Sigmoid colon (tissue), 7 donors: ENCODE measurements at regions of chrX and their contacts with region 1.

Region 1: DNA sequence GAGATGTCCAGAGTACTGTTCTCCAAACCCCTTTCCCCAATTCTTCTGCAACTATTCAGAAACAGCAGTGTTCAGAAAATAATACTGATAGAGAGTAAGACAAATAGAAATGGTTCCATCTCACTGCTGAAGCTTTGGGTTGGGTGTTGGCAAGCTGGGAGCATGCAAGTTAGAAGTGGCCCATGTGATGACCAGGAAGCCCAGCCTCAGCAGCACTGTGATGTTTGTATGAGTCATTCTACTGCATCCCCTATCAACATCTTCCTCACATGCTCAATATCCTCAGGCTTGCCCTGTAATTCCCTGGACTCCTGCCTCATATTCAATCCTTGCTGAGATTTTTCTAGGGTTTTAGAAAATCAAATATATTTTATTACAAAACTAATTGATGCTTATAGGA is 96.5 kb downstream of the CHRDL1 start:
- DNase-seq: no peak
- H3K4me3 ChIP-seq: no peak overlapping the region
- H3K27ac ChIP-seq: no peak overlapping the region
- H3K4me1 ChIP-seq: peaks cover 0 to under 1% (median 0%) of the 10 kb centered on the region in 4 donors
- H3K27me3 ChIP-seq: no peaks in the 10 kb centered on the region
- CTCF ChIP-seq: no peak
- EP300 ChIP-seq: no peak
- POLR2A ChIP-seq: no peak

Region 2: GRCh38 chrX:110462957-110463356 is 236.2 kb before region 1 on chrX:
- intact Hi-C with region 1: no loop called
- DNase-seq: no peak
- H3K4me3 ChIP-seq: no peak overlapping the region
- H3K27ac ChIP-seq: no peak overlapping the region
- H3K4me1 ChIP-seq: no peaks in the 10 kb centered on the region
- H3K27me3 ChIP-seq: no peaks in the 10 kb centered on the region
- CTCF ChIP-seq: no peak
- EP300 ChIP-seq: no peak
- POLR2A ChIP-seq: no peak

Region 3: DNA sequence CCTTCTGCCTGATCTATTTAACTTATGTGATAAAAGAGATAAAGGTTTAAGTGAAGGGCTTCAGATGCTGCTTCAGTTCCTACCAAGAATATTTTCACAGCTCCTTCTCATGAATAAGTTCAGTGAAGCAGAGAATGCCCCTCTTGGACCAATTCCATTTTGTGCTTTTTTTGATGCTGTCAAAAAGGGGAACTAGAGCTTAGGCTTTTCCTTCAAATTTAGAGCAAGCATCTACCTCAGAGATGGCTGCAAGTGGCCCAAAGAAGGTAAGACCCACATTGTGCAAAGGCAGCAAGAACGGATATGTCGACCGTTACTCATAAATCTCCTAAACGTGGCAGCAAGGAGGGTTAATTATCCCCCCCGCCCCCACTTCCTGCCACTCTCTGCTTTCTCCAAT is 92.0 kb after region 1 on chrX:
- intact Hi-C with region 1: loop called (anchors 5 kb)
- DNase-seq: no peak
- H3K4me3 ChIP-seq: no peak overlapping the region
- H3K27ac ChIP-seq: no peak overlapping the region
- H3K4me1 ChIP-seq: peaks cover 0 to 3% (median 0%) of the 10 kb centered on the region in 4 donors
- H3K27me3 ChIP-seq: peaks cover 0 to 2% (median 0%) of the 10 kb centered on the region in 3 donors
- CTCF ChIP-seq: no peak
- EP300 ChIP-seq: no peak
- POLR2A ChIP-seq: no peak

Region 4: GRCh38 chrX:110847334-110847733 is 148.2 kb after region 1 on chrX:
- intact Hi-C with region 1: loop called (anchors 10 kb)
- DNase-seq: no peak
- H3K4me3 ChIP-seq: no peak overlapping the region
- H3K27ac ChIP-seq: no peak overlapping the region
- H3K4me1 ChIP-seq: no peaks in the 10 kb centered on the region
- H3K27me3 ChIP-seq: no peaks in the 10 kb centered on the region
- CTCF ChIP-seq: peak; percentile 14 to 46 (median 32)
- EP300 ChIP-seq: no peak
- POLR2A ChIP-seq: no peak